ENCODE measurements at regions of chr1 and their contacts with region 1.

Region 1: GRCh38 chr1:113904674-113905434 is at the starts of genes AP4B1 and DCLRE1B:
- DNase-seq: peak; percentile 97
- CTCF ChIP-seq: peak; percentile 79

Region 2: DNA sequence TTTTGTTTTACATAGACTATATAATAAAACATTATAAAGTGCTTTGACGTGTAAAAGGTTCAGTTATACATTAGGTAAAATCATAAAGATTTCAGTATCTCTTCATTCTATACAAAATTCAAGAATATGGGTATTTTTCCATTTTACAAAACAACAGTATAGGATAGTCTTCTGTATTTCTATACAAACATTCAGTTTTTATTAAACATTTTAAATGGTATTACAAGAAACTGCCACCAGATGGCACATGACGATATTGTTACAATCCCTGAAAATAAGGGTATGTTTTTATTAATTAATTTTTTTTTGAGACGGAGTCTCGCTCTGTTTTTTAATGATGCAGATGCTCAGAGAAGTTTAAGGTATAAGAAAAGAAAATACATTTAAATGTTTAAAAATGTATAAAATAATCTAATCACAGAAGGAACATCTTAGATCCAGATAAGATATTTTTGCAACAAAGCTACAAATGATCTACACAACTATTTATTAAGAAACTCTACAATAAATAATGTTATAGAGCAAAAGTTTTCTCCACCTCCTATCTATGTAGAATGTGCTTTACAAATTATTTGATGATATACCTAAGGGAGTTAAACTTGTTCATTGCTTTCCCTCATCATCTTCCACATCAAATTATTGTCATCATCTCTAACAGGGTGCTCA is 69.1 kb before region 1 on chr1:
- in situ Hi-C with region 1: loop called (anchors 10 kb)
- DNase-seq: peak; percentile 48
- CTCF ChIP-seq: peak; percentile 29